ENCODE measurements at regions of chr16 and their contacts with region 1.

Region 1: GRCh38 chr16:10737068-10737625 is 6.5 kb upstream of the NUBP1 start:
- DNase-seq: peak; percentile 79
- H3K4me3 Mint-ChIP-seq: peak overlapping the region; percentile 51
- H3K27ac Mint-ChIP-seq: peak overlapping the region; percentile 62
- H3K4me1 Mint-ChIP-seq: peaks cover 48% of the 10 kb centered on the region
- H3K27me3 Mint-ChIP-seq: peaks cover 3% of the 10 kb centered on the region

Region 2: GRCh38 chr16:10522966-10523365 is 214.2 kb before region 1 on chr16:
- CTCF ChIA-PET with region 1: interaction called, 11 read pairs
- DNase-seq: no peak
- H3K4me3 Mint-ChIP-seq: no peak overlapping the region
- H3K27ac Mint-ChIP-seq: no peak overlapping the region
- H3K4me1 Mint-ChIP-seq: no peaks in the 10 kb centered on the region
- H3K27me3 Mint-ChIP-seq: peaks cover 4% of the 10 kb centered on the region

Region 3: DNA sequence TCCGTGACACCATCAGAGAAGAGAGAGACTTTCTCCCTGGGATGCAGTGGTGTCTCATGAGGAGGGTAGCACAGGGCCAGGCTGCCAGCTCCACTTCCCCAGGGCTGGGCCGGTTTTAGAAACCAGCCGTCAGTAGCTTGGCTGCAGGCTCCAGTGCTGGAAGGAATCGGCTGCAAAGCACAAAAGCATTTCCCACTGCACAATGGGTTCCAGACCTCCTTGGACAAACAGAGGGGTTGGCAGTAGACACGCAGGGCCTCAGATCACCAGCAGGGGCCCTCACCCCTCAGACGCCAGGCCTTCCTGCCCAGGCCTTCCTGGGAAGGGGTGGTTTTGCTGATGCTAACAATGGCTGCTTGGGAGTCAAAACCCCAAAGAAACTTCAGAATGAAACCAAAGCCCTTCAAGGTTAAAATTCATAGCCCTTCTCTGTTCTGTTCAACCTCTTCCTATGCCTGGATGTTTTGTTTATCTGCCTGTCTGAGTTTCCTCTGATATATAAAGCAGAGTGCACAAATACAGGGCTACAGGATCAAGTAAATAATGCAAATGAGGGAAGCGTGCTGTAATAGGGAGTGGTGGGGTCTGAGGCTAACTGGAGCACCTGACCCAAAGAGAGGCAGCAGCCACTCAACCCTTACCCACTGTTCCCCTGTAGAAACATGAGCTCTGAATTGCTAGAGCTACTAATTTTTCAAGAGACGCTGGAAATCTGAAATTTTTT is 68.7 kb before region 1 on chr16:
- CTCF ChIA-PET with region 1: interaction called, 11 read pairs
- DNase-seq: peak; percentile 29
- H3K4me3 Mint-ChIP-seq: no peak overlapping the region
- H3K27ac Mint-ChIP-seq: no peak overlapping the region
- H3K4me1 Mint-ChIP-seq: no peaks in the 10 kb centered on the region
- H3K27me3 Mint-ChIP-seq: no peaks in the 10 kb centered on the region

Region 4: DNA sequence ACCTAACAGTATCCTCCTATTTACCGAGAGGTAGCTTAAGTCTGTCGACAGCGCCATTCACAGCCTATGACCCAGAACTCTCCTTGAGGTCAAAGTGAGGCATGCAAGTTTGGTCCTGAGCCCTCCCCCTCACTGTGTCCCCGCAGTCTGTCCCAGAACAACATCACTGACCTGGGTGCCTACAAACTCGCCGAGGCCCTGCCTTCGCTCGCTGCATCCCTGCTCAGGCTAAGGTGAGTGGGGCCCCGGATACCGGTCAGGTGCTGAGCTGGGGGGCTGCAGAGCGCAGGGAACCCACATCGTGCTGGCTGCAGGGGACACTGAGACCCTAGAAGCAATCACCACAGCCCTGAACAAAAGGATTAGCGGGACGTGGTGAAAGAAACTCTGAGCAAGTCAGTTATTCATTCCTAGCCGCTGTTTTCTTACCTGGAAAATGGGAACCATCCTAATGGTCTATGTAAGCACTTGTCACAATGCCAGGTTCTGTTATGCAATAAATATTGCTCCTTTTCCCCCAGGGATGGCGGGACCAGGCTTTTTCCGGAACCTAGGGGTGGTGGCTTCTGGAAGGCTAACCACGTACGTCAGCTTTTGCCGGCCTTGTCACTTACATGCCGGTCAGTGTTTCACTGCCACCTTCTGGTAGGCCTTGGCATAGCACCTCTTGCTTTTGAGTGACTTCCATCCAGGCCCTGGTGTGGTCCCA is 181.3 kb after region 1 on chr16:
- CTCF ChIA-PET with region 1: interaction called, 13 read pairs
- DNase-seq: peak; percentile 90
- H3K4me3 Mint-ChIP-seq: no peak overlapping the region
- H3K27ac Mint-ChIP-seq: no peak overlapping the region
- H3K4me1 Mint-ChIP-seq: peaks cover 4% of the 10 kb centered on the region
- H3K27me3 Mint-ChIP-seq: no peaks in the 10 kb centered on the region